ENCODE measurements at regions of chr7 and their contacts with region 1.

Region 1: GRCh38 chr7:76069238-76069638 is 21.3 kb downstream of the MDH2 start:
- DNase-seq: peak; percentile 39 to 66 (median 46)
- ATAC-seq: peak; percentile 80
- H3K4me3 ChIP-seq: no peak overlapping the region
- H3K27ac ChIP-seq: no peak overlapping the region
- H3K4me1 ChIP-seq: peaks cover 0 to 35% of the 10 kb centered on the region in 2 experiments; a peak in 2 of 5 replicates
- H3K27me3 ChIP-seq: no peaks in the 10 kb centered on the region
- CTCF ChIP-seq: peak; percentile 42 to 77 (median 50); a peak in 5 of 6 replicates
- EP300 ChIP-seq: no peak
- POLR2A ChIP-seq: no peak
- RAD21 ChIP-seq: peak; percentile 80 to 91

Region 2: GRCh38 chr7:76047811-76048667 is 21.2 kb before region 1 on chr7 and contains the starts of genes MDH2 and STYXL1:
- CTCF ChIA-PET with region 1: no interaction called
- POLR2A ChIA-PET with region 1: interaction called, 21 read pairs
- in situ Hi-C with region 1: no loop called
- intact Hi-C with region 1: no loop called
- DNase-seq: peak; percentile 96 to 99 (median 96)
- ATAC-seq: peak; percentile 96
- H3K4me3 ChIP-seq: peak within 1 kb of the TSS; percentile 87
- H3K27ac ChIP-seq: peak within 1 kb of the TSS; percentile 93
- H3K4me1 ChIP-seq: peaks cover 29 to 32% of the 10 kb centered on the region in 2 experiments
- H3K27me3 ChIP-seq: no peaks in the 10 kb centered on the region
- CTCF ChIP-seq: peak in 1 of 3 experiments; percentile 44; a peak in 2 of 6 replicates
- EP300 ChIP-seq: no peak; the same call in 1 of the 2 replicates
- POLR2A ChIP-seq: peak; percentile 98
- RAD21 ChIP-seq: 0 out of 4 replicates have a peak, but pooled peaks of 1 of the 2 experiments have one; percentile 2
- polyA plus RNA-seq, gene MDH2: 242 to 411 TPM
- polyA plus RNA-seq, gene STYXL1: 36.5 to 49.7 TPM

Region 3: DNA sequence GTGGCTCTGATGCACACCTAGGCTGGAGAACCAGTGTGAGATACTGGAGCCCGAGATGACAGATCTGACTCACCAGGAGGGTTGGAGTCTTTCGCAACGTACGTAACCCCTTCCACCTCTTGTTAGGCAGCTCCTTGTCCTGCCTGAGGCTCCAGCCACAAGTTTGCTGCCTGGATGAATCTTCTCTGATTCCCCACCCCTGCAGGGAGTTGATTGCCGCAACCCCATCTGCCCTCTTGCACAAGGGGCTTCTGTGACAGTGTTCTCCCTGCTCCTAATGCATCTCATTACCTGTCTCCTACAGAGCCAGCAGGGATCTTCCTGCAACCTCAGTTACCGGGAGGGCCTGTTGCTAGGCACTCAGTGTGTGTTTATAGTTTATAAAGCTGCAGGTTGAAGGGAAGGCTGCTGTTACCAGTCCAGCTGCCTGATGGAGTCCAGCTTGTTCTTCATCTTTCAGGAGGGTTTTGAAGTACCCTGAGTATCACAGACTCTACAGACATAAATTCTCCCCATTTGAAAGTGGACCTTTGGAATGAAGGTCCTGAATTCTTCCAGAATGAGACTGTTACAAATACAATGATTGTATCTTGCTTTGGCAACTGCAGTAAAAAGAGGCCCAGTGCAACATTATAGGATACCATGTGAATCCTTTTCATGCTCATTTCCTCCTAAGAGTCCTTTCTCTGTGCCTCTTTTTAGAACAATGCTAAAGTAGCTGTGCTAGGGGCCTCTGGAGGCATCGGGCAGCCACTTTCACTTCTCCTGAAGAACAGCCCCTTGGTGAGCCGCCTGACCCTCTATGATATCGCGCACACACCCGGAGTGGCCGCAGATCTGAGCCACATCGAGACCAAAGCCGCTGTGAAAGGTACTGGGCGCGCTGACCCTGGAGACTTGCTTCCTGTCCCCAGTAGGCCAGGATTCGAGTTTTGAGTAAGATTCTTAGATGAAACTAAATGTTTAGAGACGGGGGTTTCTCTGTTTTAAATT is 14.8 kb before region 1 on chr7:
- CTCF ChIA-PET with region 1: no interaction called
- POLR2A ChIA-PET with region 1: interaction called, 21 read pairs
- in situ Hi-C with region 1: no loop called
- intact Hi-C with region 1: no loop called
- DNase-seq: no peak
- ATAC-seq: no peak
- H3K4me3 ChIP-seq: no peak overlapping the region
- H3K27ac ChIP-seq: no peak overlapping the region
- H3K4me1 ChIP-seq: peaks cover 8 to 12% of the 10 kb centered on the region in 2 experiments
- H3K27me3 ChIP-seq: no peaks in the 10 kb centered on the region
- CTCF ChIP-seq: no peak
- EP300 ChIP-seq: no peak
- POLR2A ChIP-seq: no peak
- RAD21 ChIP-seq: no peak

Region 4: GRCh38 chr7:76129366-76129765 is 60.1 kb after region 1 on chr7:
- CTCF ChIA-PET with region 1: interaction called, 3 read pairs
- POLR2A ChIA-PET with region 1: no interaction called
- in situ Hi-C with region 1: no loop called
- intact Hi-C with region 1: loop called (anchors 1 kb)
- DNase-seq: no peak
- ATAC-seq: no peak; the same call in 2 of the 3 replicates
- H3K4me3 ChIP-seq: no peak overlapping the region
- H3K27ac ChIP-seq: no peak overlapping the region
- H3K4me1 ChIP-seq: no peaks in the 10 kb centered on the region
- H3K27me3 ChIP-seq: peaks cover 0 to 5% of the 10 kb centered on the region in 2 experiments; a peak in 2 of 5 replicates
- CTCF ChIP-seq: no peak
- EP300 ChIP-seq: no peak
- POLR2A ChIP-seq: no peak
- RAD21 ChIP-seq: no peak

Region 5: DNA sequence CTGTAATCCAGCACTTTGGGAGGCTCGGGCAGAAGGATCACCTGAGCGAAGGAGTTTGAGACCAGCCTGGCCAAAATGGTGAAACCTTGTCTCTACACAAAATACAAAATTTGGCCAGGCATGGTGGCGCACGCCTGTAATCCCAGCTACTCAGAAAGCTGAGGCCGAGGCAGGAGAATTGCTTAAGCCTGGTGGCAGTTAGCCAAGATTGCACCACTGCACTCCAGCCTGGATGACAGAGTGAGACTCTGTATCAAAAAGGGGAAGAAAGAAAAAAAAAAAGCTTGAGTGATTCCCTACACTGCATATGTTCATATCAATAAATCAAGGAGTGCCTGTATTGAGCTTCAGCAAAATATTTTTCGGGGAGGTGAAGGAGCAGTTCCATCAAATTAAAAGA is 86.7 kb after region 1 on chr7:
- CTCF ChIA-PET with region 1: no interaction called
- POLR2A ChIA-PET with region 1: no interaction called
- in situ Hi-C with region 1: no loop called
- intact Hi-C with region 1: no loop called
- DNase-seq: peak in 1 of 4 experiments; percentile 46
- ATAC-seq: peak; percentile 73
- H3K4me3 ChIP-seq: no peak overlapping the region
- H3K27ac ChIP-seq: no peak overlapping the region
- H3K4me1 ChIP-seq: peaks cover 0 to 9% of the 10 kb centered on the region in 2 experiments; a peak in 3 of 5 replicates
- H3K27me3 ChIP-seq: no peaks in the 10 kb centered on the region
- CTCF ChIP-seq: no peak
- EP300 ChIP-seq: no peak
- POLR2A ChIP-seq: no peak
- RAD21 ChIP-seq: no peak

Measured in K562 (cell line).